Psoas muscle (tissue), 8 donors: ENCODE measurements at regions of chr7 and their contacts with region 1.

Region 1: GRCh38 chr7:128835790-128836641 is 5.8 kb downstream of the FLNC start:
- DNase-seq: peak; percentile 65 to 88
- ATAC-seq: peak; percentile 13 to 40 (median 26)
- H3K4me3 ChIP-seq: peak overlapping the region; percentile 89
- H3K27ac ChIP-seq: peak overlapping the region; percentile 100
- H3K4me1 ChIP-seq: peaks cover 50% of the 10 kb centered on the region
- H3K27me3 ChIP-seq: no peaks in the 10 kb centered on the region
- CTCF ChIP-seq: no peak

Region 2: GRCh38 chr7:128852537-128853254 is 16.7 kb after region 1 on chr7:
- intact Hi-C with region 1: loop called in 1 of 2 experiments (anchors 1 kb)
- DNase-seq: no peak
- ATAC-seq: no peak
- H3K4me3 ChIP-seq: no peak overlapping the region
- H3K27ac ChIP-seq: peak overlapping the region; percentile 53
- H3K4me1 ChIP-seq: no peaks in the 10 kb centered on the region
- H3K27me3 ChIP-seq: no peaks in the 10 kb centered on the region
- CTCF ChIP-seq: no peak